H1 (cell line): ENCODE measurements at regions of chr3 and their contacts with region 1.

Region 1: DNA sequence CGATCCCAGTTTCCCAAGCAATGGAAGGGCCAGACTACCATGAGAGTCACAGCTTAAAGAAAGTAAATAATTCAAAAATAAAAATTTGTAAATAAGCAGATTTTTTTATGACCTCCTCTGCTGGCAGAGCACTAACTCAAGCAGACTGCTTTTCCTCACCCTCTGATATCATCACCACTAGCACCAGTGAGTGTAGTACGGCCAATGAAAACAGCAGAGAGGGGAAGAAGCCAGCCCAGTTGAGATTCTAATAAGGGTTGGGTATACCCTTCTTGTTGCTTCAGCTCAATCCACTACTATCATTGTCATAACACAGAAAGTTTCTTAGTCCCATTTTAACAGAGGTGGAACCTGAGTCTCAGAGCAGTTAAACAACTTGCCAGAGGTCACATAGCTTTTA is 193.1 kb downstream of the ERC2 start:
- DNase-seq: no peak
- H3K4me3 ChIP-seq: no peak overlapping the region
- H3K27ac ChIP-seq: no peak overlapping the region
- H3K4me1 ChIP-seq: peaks cover 0 to 5% (median 1%) of the 10 kb centered on the region in 4 experiments; a peak in 2 of 7 replicates
- H3K27me3 ChIP-seq: no peaks in the 10 kb centered on the region
- CTCF ChIP-seq: no peak
- EP300 ChIP-seq: no peak
- POLR2A ChIP-seq: no peak
- RAD21 ChIP-seq: no peak

Region 2: GRCh38 chr3:56260262-56260661 is 14.9 kb before region 1 on chr3:
- CTCF ChIA-PET with region 1: interaction called, 24 read pairs
- POLR2A ChIA-PET with region 1: no interaction called
- DNase-seq: peak in 1 of 2 experiments; percentile 62
- H3K4me3 ChIP-seq: no peak overlapping the region
- H3K27ac ChIP-seq: no peak overlapping the region
- H3K4me1 ChIP-seq: peaks cover 0 to 4% (median 0%) of the 10 kb centered on the region in 4 experiments; a peak in 1 of 7 replicates
- H3K27me3 ChIP-seq: no peaks in the 10 kb centered on the region
- CTCF ChIP-seq: peak in 2 of 3 experiments; percentile 23 to 42; a peak in 3 of 4 replicates
- EP300 ChIP-seq: no peak
- POLR2A ChIP-seq: no peak
- RAD21 ChIP-seq: peak in 1 of 2 experiments; percentile 36; a peak in 3 of 4 replicates

Region 3: DNA sequence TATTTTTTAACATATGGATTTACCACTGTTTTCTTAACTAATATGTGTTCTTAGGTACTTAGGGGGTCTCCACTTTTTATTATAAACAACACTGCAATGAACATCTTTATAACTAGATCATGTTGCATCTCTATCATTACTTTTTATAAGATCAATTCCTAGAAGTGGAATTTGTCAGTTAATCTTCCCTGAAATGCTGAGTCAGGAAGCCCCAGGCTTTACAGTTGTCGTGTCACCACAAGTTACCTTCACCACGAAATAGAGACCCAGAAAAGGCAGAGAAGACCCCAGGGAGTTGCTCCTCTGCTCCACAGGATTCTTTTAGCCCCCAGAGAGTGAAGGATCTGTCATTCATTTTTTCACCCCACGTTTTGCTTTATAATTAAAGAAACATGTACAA is 227.6 kb after region 1 on chr3:
- CTCF ChIA-PET with region 1: no interaction called
- POLR2A ChIA-PET with region 1: no interaction called
- DNase-seq: no peak
- H3K4me3 ChIP-seq: no peak overlapping the region
- H3K27ac ChIP-seq: no peak overlapping the region
- H3K4me1 ChIP-seq: peaks cover 0 to 3% (median 0%) of the 10 kb centered on the region in 4 experiments; a peak in 1 of 7 replicates
- H3K27me3 ChIP-seq: no peaks in the 10 kb centered on the region
- CTCF ChIP-seq: no peak
- EP300 ChIP-seq: no peak
- POLR2A ChIP-seq: no peak
- RAD21 ChIP-seq: no peak